GM12878 (cell line): ENCODE measurements at regions of chr18 and their contacts with region 1.

Region 1: DNA sequence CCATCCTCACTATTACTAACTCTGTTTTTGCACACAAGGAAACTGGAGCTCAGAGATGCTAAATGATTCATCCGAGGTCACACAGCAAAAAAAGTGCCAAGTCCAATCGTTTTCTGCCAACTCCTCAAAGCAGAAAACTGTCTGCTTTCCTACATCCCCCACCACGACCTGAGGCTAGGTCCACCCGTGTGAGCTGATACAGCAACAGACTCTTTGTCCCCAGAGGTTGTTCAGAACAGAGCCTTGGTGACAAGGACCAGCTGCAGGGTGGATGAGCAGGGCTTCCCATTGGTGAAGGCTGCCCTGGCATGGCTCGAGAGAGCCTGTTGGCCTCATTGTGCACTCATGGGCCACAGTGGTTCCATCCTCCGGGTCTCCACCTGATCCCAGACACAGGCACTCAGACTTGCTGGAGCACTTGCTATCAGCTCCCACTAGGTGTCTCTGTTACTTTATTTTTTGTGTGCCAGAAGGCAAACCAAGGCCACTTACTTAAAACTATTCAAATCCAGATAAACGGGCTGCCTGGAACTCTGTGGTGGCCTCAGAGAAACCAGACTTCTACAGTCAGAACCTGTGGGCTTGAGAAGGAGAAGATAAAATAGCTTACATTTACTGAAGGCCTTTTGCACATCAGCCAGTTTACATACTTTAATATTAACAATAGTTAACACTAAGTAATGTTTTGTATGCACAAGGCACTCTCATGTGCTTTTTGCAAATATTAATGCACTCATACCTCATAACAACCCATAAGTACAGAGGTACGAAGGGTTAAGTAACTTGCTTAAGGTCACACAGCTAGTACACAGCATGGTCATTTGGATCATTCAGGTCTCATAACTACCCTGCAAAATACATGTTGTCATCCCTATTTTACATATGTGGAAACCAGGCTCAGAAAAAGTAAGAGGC is 62.9 kb upstream of the CTIF start:
- DNase-seq: peak; percentile 5
- ATAC-seq: peak; percentile 94
- H3K4me3 ChIP-seq: no peak overlapping the region
- H3K27ac ChIP-seq: no peak overlapping the region
- H3K4me1 ChIP-seq: no peaks in the 10 kb centered on the region
- H3K27me3 ChIP-seq: peaks cover 0 to 2% of the 10 kb centered on the region in 2 experiments; a peak in 2 of 4 replicates
- CTCF ChIP-seq: peak; percentile 75 to 83 (median 78)
- EP300 ChIP-seq: no peak
- POLR2A ChIP-seq: no peak
- RAD21 ChIP-seq: peak; percentile 90

Region 2: GRCh38 chr18:48410095-48410920 is 65.6 kb before region 1 on chr18:
- CTCF ChIA-PET with region 1: no interaction called
- POLR2A ChIA-PET with region 1: no interaction called
- RAD21 ChIA-PET with region 1: no interaction called
- SMC1A ChIA-PET with region 1: no interaction called
- in situ Hi-C with region 1: no loop called
- intact Hi-C with region 1: no loop called
- DNase-seq: no peak
- ATAC-seq: peak; percentile 99
- H3K4me3 ChIP-seq: peak overlapping the region; percentile 69
- H3K27ac ChIP-seq: no peak overlapping the region
- H3K4me1 ChIP-seq: no peaks in the 10 kb centered on the region
- H3K27me3 ChIP-seq: peaks cover 11 to 16% of the 10 kb centered on the region in 2 experiments
- CTCF ChIP-seq: no peak
- EP300 ChIP-seq: no peak
- POLR2A ChIP-seq: no peak
- RAD21 ChIP-seq: no peak

Region 3: GRCh38 chr18:48486754-48487153 is 10.9 kb after region 1 on chr18:
- CTCF ChIA-PET with region 1: interaction called, 21 read pairs
- POLR2A ChIA-PET with region 1: no interaction called
- RAD21 ChIA-PET with region 1: no interaction called
- SMC1A ChIA-PET with region 1: interaction called, 4 read pairs
- in situ Hi-C with region 1: no loop called
- intact Hi-C with region 1: no loop called
- DNase-seq: no peak
- ATAC-seq: no peak
- H3K4me3 ChIP-seq: no peak overlapping the region
- H3K27ac ChIP-seq: no peak overlapping the region
- H3K4me1 ChIP-seq: no peaks in the 10 kb centered on the region
- H3K27me3 ChIP-seq: no peaks in the 10 kb centered on the region
- CTCF ChIP-seq: no peak
- EP300 ChIP-seq: no peak
- POLR2A ChIP-seq: no peak
- RAD21 ChIP-seq: no peak

Region 4: DNA sequence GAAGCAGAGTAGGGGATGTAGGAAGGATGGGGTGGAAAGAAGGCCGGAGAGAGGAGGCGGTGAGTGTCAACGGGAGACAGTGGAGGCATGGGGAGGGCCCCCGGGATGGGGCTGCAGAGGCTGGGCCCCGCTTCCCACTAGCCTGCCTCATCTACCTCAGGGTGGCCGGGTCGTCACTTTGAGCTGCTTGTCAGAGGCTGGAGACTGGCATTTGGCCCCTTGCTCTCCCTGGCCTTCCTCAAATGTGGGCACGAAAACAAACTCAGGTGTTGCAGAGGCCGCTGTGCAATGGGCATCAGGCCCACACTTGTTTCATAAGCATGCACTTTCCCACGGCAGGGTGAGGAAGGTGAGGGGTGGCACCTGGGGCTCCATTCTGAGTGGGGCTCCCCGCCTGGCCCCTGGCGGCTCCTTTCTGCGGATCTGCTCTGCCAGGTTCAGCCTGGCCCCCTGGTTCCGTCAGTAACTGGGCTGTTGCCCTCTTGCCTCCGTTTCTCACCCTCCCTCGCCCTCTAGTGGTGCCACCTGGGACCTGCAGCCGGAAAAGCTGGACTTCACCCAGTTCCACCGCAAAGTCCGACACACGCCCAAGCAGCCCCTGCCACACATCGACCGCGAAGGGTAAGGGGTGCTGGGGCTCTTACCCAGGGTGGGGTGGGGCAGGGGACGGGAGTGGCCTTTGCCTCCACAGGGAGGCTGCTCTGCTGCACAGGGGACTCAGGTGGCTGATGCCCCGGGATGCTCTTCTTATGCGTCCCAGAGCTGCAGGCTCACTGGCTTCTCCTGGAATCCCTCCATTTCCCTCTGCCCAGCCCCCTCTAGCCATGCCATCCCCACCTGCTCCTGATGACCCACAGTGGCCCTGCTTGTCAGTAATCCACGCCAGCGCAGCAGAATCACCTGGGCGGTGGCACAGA is 188.3 kb after region 1 on chr18:
- CTCF ChIA-PET with region 1: interaction called, 13 read pairs
- POLR2A ChIA-PET with region 1: no interaction called
- RAD21 ChIA-PET with region 1: interaction called, 3 read pairs
- SMC1A ChIA-PET with region 1: interaction called, 6 read pairs
- in situ Hi-C with region 1: loop called (anchors 5 kb)
- intact Hi-C with region 1: loop called (anchors 1 kb)
- DNase-seq: no peak
- ATAC-seq: peak; percentile 57
- H3K4me3 ChIP-seq: no peak overlapping the region
- H3K27ac ChIP-seq: no peak overlapping the region
- H3K4me1 ChIP-seq: no peaks in the 10 kb centered on the region
- H3K27me3 ChIP-seq: no peaks in the 10 kb centered on the region; a peak in 1 of 4 replicates
- CTCF ChIP-seq: peak; percentile 84 to 97 (median 88)
- EP300 ChIP-seq: no peak
- POLR2A ChIP-seq: no peak
- RAD21 ChIP-seq: peak; percentile 79